Dendritic cell treated with granulocyte-macrophage colony-stimulating factor and Interleukin-4, amounts not matched to agents 40 ng/mL and 50 ng/mL, for 4 days (primary cell): ENCODE measurements at regions of chr20 and their contacts with region 1.

Region 1: GRCh38 chr20:60262967-60263603 is 304.9 kb downstream of the CDH26 start:
- H3K4me3 Mint-ChIP-seq: no peak overlapping the region
- H3K27ac Mint-ChIP-seq: no peak overlapping the region
- H3K4me1 Mint-ChIP-seq: peaks cover 5% of the 10 kb centered on the region
- H3K27me3 Mint-ChIP-seq: no peaks in the 10 kb centered on the region

Region 2: DNA sequence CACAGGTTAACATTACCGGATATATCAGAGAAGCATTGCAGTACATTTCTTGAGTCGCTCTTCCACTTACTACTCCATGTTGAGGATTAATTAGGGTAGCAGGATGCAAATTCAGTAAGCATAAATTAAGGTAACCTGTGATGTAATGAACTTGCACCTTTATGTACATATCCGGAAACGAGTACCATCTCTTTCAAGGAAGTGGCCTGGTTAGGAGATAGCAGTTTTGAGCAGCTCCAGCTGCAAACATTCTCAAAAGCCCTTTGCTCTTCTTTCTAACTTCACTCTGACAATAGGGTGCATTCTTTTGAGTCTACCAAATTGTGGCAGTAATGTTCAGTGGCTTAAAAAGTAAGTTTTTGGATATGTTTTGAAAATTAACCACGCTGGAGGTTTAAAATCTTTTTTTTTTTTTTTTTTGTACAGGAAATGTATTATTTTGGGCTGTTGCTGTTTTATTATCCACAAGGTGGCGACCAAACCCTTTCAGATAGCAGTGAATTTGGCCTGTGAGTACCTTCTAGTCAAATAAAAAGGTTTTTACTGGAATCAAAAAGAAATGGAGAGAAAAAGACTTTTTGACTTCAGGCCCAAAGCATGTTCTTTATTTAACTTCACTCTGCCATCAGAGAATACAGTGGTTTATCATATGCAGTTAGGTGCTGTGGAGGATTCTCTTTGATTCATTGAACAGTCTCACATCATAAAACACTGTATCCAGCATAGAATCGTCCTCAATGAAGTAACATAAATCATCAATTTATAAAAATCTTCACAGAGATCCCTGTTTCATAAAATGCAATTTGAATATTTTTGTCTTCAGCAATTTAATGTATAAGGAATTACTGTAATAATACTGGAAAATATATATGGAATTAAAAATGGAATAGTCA is 314.0 kb before region 1 on chr20:
- intact Hi-C with region 1: loop called (anchors 5 kb)
- H3K4me3 Mint-ChIP-seq: no peak overlapping the region
- H3K27ac Mint-ChIP-seq: no peak overlapping the region
- H3K4me1 Mint-ChIP-seq: peaks cover 21% of the 10 kb centered on the region
- H3K27me3 Mint-ChIP-seq: no peaks in the 10 kb centered on the region

Region 3: DNA sequence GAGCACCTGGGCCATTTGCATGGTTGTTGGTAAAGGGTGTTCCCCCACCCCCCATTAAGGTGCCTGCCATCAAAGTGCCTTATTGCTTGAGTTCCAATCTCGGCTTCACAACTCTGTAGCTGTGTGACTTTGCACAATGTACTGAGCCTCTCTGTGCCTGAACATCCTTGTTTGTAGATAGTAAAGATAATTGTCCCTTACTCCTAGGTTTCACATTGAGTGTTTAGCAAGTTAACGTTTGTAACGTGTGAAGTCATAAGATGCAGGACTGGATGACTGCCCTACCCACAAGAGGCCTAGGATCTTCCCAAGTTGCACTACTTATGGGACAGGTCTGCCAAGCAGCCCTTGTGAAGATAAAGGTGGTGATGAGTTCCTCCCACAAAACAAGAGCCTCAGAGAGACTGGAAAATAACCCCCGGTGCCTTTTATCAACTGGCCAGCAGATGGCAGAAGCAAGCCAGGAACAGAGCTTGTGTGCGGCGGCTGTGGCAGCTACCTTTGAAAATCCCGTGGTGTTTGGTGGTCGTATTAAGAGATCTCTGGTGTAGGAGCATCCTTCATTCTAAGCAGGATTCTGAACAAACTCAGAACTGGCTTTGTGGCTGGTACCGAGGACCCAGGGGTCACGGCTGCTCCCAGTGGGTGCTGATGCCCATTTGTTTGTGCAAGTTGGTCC is 205.8 kb before region 1 on chr20:
- intact Hi-C with region 1: loop called (anchors 1 kb)
- H3K4me3 Mint-ChIP-seq: peak overlapping the region; percentile 21
- H3K27ac Mint-ChIP-seq: peak overlapping the region; percentile 81
- H3K4me1 Mint-ChIP-seq: peaks cover 77% of the 10 kb centered on the region
- H3K27me3 Mint-ChIP-seq: no peaks in the 10 kb centered on the region

Region 4: DNA sequence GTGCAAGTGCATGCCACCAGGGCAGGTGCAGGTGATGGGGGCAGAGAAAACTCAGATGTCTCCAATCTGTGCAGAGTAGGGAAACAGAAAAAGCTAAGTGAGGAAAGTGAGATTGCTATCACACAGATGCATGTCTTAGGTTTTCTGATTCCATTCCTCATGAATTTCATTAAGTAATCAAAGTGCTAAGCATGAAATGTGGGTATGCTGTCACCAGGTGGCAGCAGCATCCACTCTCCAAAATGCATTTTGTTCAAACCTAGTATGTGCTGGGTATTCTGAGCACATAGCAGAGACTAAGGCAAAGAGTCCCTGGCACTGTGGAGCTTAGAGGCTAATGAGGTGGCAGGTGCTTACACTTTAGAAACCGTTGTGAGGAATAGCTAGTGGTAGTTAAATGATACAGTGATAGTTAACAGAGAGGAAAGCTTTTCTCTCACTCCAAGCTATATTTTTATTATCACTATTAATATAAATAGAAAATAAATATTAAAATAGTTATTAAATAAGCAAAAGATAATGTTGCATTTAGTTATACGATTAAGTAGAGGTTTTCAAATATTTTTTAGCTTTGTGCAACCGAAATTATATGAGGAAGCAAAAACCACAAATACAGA is 125.3 kb before region 1 on chr20:
- intact Hi-C with region 1: loop called (anchors 2 kb)
- H3K4me3 Mint-ChIP-seq: peak overlapping the region; percentile 75
- H3K27ac Mint-ChIP-seq: peak overlapping the region; percentile 83
- H3K4me1 Mint-ChIP-seq: peaks cover 69% of the 10 kb centered on the region
- H3K27me3 Mint-ChIP-seq: no peaks in the 10 kb centered on the region

Region 5: GRCh38 chr20:60210779-60211617 is 52.1 kb before region 1 on chr20:
- intact Hi-C with region 1: loop called (anchors 1 kb)
- H3K4me3 Mint-ChIP-seq: peak overlapping the region; percentile 44
- H3K27ac Mint-ChIP-seq: no peak overlapping the region
- H3K4me1 Mint-ChIP-seq: peaks cover 10% of the 10 kb centered on the region
- H3K27me3 Mint-ChIP-seq: no peaks in the 10 kb centered on the region

Region 6: DNA sequence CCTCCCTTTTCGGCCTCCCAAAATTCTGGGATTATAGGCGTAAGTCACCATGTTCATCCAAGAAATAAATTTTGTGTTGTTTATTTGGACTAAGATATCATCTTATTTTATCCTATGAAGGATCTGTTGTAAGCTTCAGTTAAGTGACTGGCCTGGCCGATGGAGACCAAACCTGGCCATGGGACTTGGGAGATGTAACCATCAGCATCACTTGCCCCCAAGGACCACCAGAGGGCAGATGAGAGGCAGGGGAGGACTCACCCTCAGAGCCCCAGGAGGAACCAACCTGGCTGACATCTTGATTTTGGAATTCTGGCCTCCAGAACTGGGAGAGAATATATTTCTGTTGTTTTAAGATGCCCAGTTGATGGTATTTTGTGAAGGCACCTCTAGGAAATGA is 38.2 kb before region 1 on chr20:
- intact Hi-C with region 1: loop called (anchors 5 kb)
- H3K4me3 Mint-ChIP-seq: no peak overlapping the region
- H3K27ac Mint-ChIP-seq: no peak overlapping the region
- H3K4me1 Mint-ChIP-seq: peaks cover 37% of the 10 kb centered on the region
- H3K27me3 Mint-ChIP-seq: no peaks in the 10 kb centered on the region

Region 7: DNA sequence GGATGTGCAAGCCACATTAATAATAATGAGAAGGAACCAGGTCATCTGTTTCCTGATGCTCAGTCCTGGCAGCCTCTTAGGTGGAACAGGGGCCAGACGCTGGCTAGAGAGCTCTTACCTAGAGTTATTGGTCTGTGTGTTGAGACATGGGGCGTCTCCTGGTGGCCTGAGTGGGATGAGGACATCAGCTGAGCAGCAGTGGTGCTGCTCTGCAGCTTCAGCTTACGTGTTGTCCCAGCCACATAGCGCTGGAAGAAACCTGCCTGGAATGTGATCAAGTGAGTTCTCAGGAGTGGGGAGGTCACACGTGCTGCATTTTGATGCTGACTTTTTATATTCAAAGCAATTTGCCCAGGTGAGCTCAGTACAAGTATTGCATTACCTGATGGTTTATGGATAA is 50.5 kb after region 1 on chr20:
- intact Hi-C with region 1: no loop called
- H3K4me3 Mint-ChIP-seq: no peak overlapping the region
- H3K27ac Mint-ChIP-seq: no peak overlapping the region
- H3K4me1 Mint-ChIP-seq: no peaks in the 10 kb centered on the region
- H3K27me3 Mint-ChIP-seq: no peaks in the 10 kb centered on the region

Region 8: GRCh38 chr20:60446267-60447111 is 183.4 kb after region 1 on chr20:
- intact Hi-C with region 1: no loop called
- H3K4me3 Mint-ChIP-seq: no peak overlapping the region
- H3K27ac Mint-ChIP-seq: no peak overlapping the region
- H3K4me1 Mint-ChIP-seq: no peaks in the 10 kb centered on the region
- H3K27me3 Mint-ChIP-seq: peaks cover 25% of the 10 kb centered on the region